ENCODE measurements at regions of chr6 and their contacts with region 1.

Region 1: GRCh38 chr6:26156076-26156849 is 69.0 kb downstream of the HFE start:
- DNase-seq: peak; percentile 97
- H3K4me3 Mint-ChIP-seq: peak overlapping the region; percentile 90
- H3K27ac Mint-ChIP-seq: peak overlapping the region; percentile 93
- H3K4me1 Mint-ChIP-seq: peaks cover 53% of the 10 kb centered on the region
- H3K27me3 Mint-ChIP-seq: peaks cover 11% of the 10 kb centered on the region

Region 2: GRCh38 chr6:25899123-25899522 is 257.1 kb before region 1 on chr6:
- intact Hi-C with region 1: no loop called
- DNase-seq: no peak
- H3K4me3 Mint-ChIP-seq: no peak overlapping the region
- H3K27ac Mint-ChIP-seq: no peak overlapping the region
- H3K4me1 Mint-ChIP-seq: no peaks in the 10 kb centered on the region
- H3K27me3 Mint-ChIP-seq: peaks cover 1% of the 10 kb centered on the region

Region 3: DNA sequence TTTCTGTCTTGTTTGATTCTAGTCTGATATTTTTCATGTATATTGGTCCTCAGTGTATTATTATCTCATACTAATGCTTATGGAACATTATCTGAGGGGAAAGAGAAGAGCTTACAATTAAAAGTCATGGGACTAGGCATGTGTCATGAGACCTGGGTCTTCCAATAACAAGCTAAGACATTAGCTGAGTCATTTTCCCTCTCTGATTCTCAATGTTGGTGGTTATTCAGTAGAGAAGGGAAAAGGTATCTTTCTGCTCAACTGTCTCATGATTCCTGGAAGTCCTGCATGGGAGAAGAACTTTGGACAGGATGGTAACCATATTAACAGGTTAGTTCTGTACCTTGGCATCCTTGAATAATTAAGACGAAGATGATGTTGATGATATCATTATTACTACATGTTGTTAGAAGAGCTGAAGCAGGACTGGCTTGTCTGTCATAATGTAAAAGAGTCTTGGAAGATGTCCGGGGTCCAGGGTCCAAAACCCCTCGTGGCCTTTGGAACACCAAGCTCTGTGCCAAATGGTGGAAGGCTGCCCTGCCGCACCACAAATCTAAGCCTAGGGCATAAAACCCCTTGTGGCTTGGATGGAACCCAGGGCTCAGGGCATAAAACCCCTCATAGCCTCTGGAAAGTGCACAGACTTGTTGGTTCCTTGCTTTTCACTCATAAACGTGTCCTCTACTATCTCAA is 174.5 kb before region 1 on chr6:
- intact Hi-C with region 1: no loop called
- DNase-seq: no peak
- H3K4me3 Mint-ChIP-seq: no peak overlapping the region
- H3K27ac Mint-ChIP-seq: peak overlapping the region; percentile 43
- H3K4me1 Mint-ChIP-seq: peaks cover 18% of the 10 kb centered on the region
- H3K27me3 Mint-ChIP-seq: no peaks in the 10 kb centered on the region

Region 4: GRCh38 chr6:26054857-26055669 is 101.2 kb before region 1 on chr6:
- intact Hi-C with region 1: loop called (anchors 1 kb)
- DNase-seq: peak; percentile 96
- H3K4me3 Mint-ChIP-seq: peak overlapping the region; percentile 94
- H3K27ac Mint-ChIP-seq: peak overlapping the region; percentile 99
- H3K4me1 Mint-ChIP-seq: peaks cover 30% of the 10 kb centered on the region
- H3K27me3 Mint-ChIP-seq: peaks cover 2% of the 10 kb centered on the region

Region 5: DNA sequence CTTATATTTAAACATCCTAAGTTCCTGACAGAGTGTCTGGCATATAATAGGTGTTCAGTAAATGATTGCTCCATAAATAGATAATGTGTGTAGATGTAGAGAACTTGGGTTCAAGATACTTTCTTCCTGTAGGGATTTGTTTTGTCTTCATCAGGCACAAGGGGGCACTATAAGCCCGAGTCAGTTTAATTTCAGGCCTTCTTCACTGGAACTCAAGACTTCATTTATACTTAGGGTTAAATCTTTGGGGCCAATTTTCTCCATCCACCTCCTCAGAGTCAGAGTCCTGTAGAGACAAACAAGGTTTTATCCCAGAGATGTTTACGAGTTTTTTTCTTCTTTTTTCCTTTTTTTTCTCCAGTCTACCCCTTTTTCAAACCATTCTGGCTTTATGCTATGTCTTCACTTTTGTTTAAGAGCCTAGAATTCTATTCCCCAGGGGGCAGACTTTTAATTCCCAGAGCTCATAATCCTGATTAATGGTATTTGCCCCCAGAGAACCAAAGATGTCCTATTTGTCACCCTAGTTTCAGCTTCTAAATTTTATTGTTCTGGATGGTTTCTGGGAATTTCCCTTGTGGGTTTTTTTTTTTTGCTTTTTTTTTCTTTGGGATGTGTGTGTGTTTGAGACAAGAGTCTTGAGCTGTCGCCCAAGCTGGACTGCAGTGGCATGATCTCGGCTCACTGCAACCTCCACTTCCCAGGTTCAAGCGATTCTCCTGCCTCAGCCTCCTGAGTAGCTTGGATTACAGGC is 19.3 kb after region 1 on chr6:
- intact Hi-C with region 1: loop called (anchors 1 kb)
- DNase-seq: peak; percentile 91
- H3K4me3 Mint-ChIP-seq: peak overlapping the region; percentile 40
- H3K27ac Mint-ChIP-seq: peak overlapping the region; percentile 63
- H3K4me1 Mint-ChIP-seq: peaks cover 45% of the 10 kb centered on the region
- H3K27me3 Mint-ChIP-seq: no peaks in the 10 kb centered on the region

Region 6: GRCh38 chr6:26196846-26197648 is 40.8 kb after region 1 on chr6:
- intact Hi-C with region 1: loop called (anchors 1 kb)
- DNase-seq: peak; percentile 96
- H3K4me3 Mint-ChIP-seq: peak overlapping the region; percentile 87
- H3K27ac Mint-ChIP-seq: peak overlapping the region; percentile 93
- H3K4me1 Mint-ChIP-seq: peaks cover 57% of the 10 kb centered on the region
- H3K27me3 Mint-ChIP-seq: no peaks in the 10 kb centered on the region

Region 7: DNA sequence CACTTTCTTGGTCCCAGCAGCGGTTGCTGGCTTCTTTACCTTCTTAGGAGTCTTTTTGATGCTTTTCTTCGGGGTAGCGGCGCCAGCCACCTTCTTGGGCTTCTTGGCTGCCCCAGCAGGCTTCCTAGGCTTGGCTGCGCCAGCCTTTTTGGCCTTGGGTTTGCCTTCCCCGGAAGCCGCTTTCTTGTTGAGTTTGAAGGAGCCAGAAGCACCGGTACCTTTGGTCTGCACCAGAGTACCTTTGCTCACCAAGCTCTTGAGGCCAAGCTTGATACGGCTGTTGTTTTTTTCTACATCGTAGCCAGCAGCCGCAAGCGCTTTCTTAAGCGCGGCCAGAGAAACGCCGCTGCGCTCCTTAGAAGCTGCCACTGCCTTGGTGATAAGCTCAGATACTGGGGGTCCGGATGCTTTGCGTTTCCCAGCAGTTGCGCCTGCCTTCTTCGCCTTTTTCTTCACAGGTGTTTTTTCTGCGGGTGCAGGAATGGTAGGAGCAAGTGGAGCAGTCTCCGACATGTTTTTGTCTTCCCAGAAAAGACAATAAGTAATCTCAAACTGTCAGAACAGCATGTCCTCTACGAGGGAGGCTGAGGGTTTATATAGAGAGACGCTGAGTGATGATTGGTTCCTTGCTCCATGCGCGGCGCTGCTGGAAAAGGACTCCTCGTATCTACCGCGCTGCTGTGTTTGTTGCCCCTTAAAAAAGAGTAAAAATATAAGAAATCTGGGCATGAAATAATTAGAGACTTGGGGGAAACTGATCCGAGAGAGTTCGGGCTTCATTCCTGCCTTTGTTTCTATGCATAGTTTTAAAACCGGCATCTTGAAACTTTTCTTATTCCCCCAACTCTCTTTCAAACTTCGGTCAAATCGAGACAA is 78.4 kb after region 1 on chr6:
- intact Hi-C with region 1: loop called (anchors 2 kb)
- DNase-seq: peak; percentile 95
- H3K4me3 Mint-ChIP-seq: peak overlapping the region; percentile 82
- H3K27ac Mint-ChIP-seq: peak overlapping the region; percentile 97
- H3K4me1 Mint-ChIP-seq: peaks cover 39% of the 10 kb centered on the region
- H3K27me3 Mint-ChIP-seq: no peaks in the 10 kb centered on the region

Region 8: DNA sequence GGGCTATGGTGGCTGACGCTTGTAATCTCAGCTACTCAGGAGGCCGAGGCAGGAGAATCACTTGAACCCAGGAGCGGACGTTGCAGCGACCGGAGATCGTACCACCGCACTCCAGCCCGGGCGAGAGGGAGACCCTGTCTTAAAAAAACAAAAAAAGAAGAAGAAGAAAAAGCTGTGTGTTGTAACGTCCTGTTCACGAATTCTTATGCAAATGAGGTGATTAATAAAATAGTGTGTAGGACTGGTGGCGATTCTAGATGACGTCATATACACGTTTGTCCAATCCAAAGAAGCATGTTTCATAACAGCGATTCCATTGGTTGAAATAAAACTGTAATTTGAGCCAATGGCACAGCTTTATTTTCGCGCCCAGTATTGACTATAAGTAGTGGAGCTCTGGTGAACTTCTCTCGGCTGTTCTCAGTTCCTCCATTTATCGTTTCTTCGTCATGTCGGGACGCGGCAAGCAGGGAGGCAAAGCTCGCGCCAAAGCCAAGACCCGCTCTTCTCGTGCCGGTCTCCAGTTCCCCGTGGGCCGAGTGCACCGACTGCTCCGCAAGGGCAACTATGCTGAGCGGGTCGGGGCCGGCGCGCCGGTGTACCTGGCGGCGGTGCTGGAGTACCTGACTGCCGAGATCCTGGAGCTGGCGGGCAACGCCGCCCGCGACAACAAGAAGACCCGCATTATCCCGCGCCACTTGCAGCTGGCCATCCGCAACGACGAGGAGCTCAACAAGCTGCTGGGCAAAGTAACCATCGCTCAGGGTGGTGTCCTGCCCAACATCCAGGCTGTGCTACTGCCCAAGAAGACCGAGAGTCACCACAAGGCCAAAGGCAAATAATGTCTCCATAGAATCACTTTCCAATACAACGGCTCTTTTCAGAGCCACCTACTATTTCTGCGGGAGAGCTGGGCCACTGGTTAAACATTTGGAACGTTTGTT is 1708.9 kb after region 1 on chr6:
- intact Hi-C with region 1: loop called (anchors 5 kb)
- DNase-seq: peak; percentile 95
- H3K4me3 Mint-ChIP-seq: peak overlapping the region; percentile 97
- H3K27ac Mint-ChIP-seq: peak overlapping the region; percentile 100
- H3K4me1 Mint-ChIP-seq: peaks cover 58% of the 10 kb centered on the region
- H3K27me3 Mint-ChIP-seq: peaks cover 2% of the 10 kb centered on the region